WTC11 (cell line): ENCODE measurements at regions of chr2 and their contacts with region 1.

Region 1: DNA sequence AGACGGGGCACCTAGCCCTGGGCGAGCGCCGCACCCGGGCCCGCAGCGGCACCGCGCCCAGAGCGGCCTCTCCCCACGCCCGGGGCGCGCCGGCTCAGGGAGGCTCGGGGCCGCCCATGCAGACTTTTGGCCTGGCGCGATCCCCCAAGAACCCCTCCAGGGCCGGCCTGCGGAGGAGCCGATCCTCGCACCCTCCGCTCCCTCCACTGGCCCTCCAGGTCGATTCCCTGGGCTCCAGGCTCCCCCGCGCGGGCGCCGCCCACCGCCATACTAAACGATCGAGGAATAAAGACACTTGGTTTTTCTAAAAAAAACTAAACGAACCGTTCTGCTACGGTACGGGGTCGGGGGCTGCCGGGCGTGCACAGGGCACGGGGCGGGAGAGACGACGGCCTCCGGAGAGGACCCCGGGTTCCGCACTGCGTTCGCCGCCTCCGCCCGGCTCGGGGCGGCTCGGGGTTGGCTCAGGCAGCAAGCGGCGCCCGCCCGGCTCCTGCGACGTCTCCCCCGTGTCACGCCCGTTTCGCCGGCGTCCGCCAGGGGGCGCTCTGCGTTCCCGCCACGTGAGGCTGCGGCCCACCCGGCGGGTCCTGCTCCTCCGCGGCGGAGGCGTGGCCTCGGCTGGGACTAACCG is 365 bp upstream of the KHK start:
- DNase-seq: peak; percentile 97
- ATAC-seq: peak; percentile 81
- H3K4me3 Mint-ChIP-seq: peak overlapping the region; percentile 70
- H3K27ac Mint-ChIP-seq: no peak overlapping the region
- H3K4me1 Mint-ChIP-seq: peaks cover 21% of the 10 kb centered on the region
- H3K27me3 Mint-ChIP-seq: peaks cover 23% of the 10 kb centered on the region
- CTCF ChIP-seq: peak; percentile 98

Region 2: GRCh38 chr2:26952374-26952773 is 133.8 kb before region 1 on chr2:
- CTCF ChIA-PET with region 1: no interaction called
- POLR2A ChIA-PET with region 1: no interaction called
- DNase-seq: no peak
- ATAC-seq: peak; percentile 39; the same call in 1 of the 2 replicates
- H3K4me3 Mint-ChIP-seq: no peak overlapping the region
- H3K27ac Mint-ChIP-seq: no peak overlapping the region
- H3K4me1 Mint-ChIP-seq: 0 out of 2 replicates have a peak, but pooled peaks cover 2% of the 10 kb centered on the region
- H3K27me3 Mint-ChIP-seq: no peaks in the 10 kb centered on the region
- CTCF ChIP-seq: no peak

Region 3: GRCh38 chr2:27071277-27071989 is 14.8 kb before region 1 on chr2 and contains the start of gene OST4:
- CTCF ChIA-PET with region 1: interaction called, 50 read pairs
- POLR2A ChIA-PET with region 1: interaction called, 11 read pairs
- DNase-seq: peak; percentile 90
- ATAC-seq: peak; percentile 89
- H3K4me3 Mint-ChIP-seq: peak within 1 kb of the TSS; percentile 98
- H3K27ac Mint-ChIP-seq: peak within 1 kb of the TSS; percentile 90
- H3K4me1 Mint-ChIP-seq: peaks cover 11% of the 10 kb centered on the region
- H3K27me3 Mint-ChIP-seq: peaks cover 3% of the 10 kb centered on the region
- CTCF ChIP-seq: no peak
- total RNA-seq, gene OST4: 210 to 239 TPM (median 226 TPM) in 3 replicates

Region 4: DNA sequence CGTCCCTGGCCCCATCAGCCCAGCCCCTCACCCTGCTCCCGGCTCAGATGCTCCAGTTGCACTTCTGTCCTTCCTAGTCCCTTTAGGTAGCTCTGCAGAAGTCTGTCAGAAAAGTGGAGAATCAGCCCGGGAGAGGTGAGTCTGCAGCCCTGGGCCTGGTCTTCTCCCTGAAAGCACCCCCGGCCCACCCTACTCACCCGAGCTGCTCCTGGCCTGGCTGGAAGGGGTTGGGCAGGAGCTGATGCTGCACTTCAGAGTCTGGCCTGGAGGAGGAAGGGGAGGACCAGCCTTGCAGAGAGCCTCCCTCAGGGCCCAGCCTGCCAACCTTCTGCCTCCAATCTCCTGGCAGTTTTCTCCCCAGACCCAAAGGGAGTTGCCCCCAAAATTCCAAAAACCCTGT is 16.1 kb after region 1 on chr2:
- CTCF ChIA-PET with region 1: interaction called, 14 read pairs
- POLR2A ChIA-PET with region 1: no interaction called
- DNase-seq: no peak
- ATAC-seq: no peak; the same call in 1 of the 2 replicates
- H3K4me3 Mint-ChIP-seq: no peak overlapping the region
- H3K27ac Mint-ChIP-seq: no peak overlapping the region
- H3K4me1 Mint-ChIP-seq: no peaks in the 10 kb centered on the region
- H3K27me3 Mint-ChIP-seq: 0 out of 2 replicates have a peak, but pooled peaks cover 5% of the 10 kb centered on the region
- CTCF ChIP-seq: no peak

Region 5: GRCh38 chr2:27202854-27203253 is 116.6 kb after region 1 on chr2:
- CTCF ChIA-PET with region 1: no interaction called
- POLR2A ChIA-PET with region 1: no interaction called
- DNase-seq: no peak
- ATAC-seq: no peak
- H3K4me3 Mint-ChIP-seq: no peak overlapping the region
- H3K27ac Mint-ChIP-seq: no peak overlapping the region
- H3K4me1 Mint-ChIP-seq: no peaks in the 10 kb centered on the region
- H3K27me3 Mint-ChIP-seq: no peaks in the 10 kb centered on the region
- CTCF ChIP-seq: no peak

Region 6: GRCh38 chr2:27217217-27218121 is 131.3 kb after region 1 on chr2 and contains the start of gene CAD:
- CTCF ChIA-PET with region 1: no interaction called
- POLR2A ChIA-PET with region 1: no interaction called
- DNase-seq: peak; percentile 90
- ATAC-seq: peak; percentile 80
- H3K4me3 Mint-ChIP-seq: peak within 1 kb of the TSS; percentile 90
- H3K27ac Mint-ChIP-seq: peak within 1 kb of the TSS; percentile 98
- H3K4me1 Mint-ChIP-seq: peaks cover 30% of the 10 kb centered on the region
- H3K27me3 Mint-ChIP-seq: no peaks in the 10 kb centered on the region
- CTCF ChIP-seq: no peak
- total RNA-seq, gene CAD: 145 to 178 TPM (median 150 TPM) in 3 replicates